Dorsolateral prefrontal cortex (tissue), 120 donors: ENCODE measurements at regions of chr19 and their contacts with region 1.

Region 1: DNA sequence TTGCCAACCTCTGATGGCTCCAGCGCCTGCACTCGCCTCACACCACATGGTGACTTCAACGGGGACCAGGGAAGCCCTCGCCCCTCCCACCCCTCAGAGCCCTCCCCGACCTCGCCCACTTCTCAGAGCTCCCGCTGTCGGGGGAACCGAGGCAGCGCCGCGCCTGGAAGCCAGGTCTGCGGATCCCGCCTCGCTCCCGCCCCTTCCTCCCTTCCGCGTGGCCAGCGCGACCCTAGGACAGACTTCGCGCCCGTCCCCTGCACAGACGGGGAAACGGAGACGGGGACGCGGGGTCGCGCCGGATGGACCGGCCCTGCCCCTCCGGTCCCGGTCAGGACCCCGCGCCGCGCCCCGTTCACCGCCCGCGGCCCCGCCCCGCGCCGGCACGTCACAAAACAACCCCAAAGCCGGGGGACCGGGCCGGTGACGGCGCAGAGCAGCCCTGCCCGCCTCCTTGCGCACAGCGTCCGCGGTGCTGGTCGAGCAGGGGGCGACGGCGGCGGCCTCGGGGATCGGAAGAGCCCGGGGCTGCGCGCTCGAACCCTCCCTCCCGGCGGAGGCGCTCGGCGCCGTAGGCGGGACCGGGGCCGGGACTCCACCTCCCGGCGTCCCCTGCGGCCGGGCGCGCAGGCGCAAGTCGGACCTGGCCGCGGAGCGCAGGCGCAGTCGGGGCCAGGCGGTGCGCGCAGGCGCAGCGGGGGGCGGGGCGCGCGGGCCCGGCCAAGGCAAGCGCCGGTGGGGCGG is 379 bp upstream of the CDC34 start:
- DNase-seq: peak in 8 of 10 donors; percentile 46 to 91 (median 60)
- H3K4me3 ChIP-seq: peak overlapping the region; percentile 63 to 99 (median 92)
- H3K27ac ChIP-seq: peak overlapping the region; percentile 71 to 99 (median 94)
- H3K27me3 ChIP-seq: no peaks in the 10 kb centered on the region
- CTCF ChIP-seq: peak in 9 of 56 donors; percentile 8 to 41 (median 18)

Region 2: DNA sequence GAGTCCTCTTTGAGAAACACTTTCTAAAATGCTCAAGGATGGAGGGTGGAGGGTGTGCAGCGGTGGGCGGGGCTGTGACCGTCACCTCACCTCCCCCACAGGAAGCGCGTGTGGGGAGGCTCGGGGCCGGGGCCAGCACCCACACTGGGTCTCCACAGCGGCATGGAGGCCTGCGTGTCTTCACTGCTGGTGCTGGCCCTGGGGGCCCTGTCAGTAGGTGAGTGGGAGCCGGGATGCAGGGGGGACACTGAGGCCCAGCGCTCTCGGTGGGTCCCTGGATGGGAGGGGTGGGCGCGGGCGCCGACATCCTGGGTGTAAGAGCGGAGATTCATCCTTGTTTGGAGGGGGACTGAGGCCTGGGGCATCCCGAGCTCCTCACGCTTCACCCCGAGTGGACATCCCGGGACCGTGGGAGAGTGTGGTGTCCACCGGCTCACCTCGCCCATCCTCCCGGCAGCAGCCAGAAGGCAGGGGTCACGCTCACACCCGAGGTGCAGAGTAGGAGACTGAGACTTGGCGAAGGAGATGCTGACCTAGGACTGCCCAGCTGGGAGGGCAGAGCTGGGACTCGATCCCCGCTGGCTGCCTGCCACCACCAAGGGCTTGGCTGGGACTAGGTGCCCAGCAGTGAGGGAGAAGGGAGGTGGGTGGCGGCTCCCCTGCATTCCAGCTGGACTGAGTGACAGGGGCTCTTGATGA is 12.9 kb after region 1 on chr19 and contains the start of gene GZMM:
- intact Hi-C with region 1: no loop called
- DNase-seq: no peak
- H3K4me3 ChIP-seq: no peak within 1 kb of the TSS
- H3K27ac ChIP-seq: peak within 1 kb of the TSS in 2 of 59 donors; percentile 27 to 29
- H3K27me3 ChIP-seq: no peaks in the 10 kb centered on the region
- CTCF ChIP-seq: no peak
- total RNA-seq, gene GZMM: 0.43 to 5.3 (median 0.94) TPM in 82 of 120 experiments, not detected in the others

Region 3: DNA sequence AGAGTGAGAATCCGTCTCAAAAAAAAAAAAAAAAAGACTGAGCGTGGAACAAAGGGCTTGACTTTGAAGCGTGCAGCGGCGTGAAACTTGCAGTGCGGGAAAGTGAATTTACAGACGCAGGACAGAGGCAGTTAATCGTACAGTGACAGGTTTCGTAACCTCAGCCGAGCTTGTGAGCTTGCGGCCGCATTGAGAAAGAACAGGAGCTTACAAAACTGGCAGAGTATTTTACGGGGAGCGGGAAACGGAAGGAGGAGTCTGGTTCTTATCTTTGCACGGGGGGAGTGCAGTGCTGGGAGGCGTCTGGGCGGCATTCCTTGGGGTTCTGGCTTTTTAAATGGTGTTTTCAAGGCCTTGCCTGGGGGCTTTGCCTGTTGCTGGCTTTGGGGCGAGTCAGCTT is 35.2 kb after region 1 on chr19:
- intact Hi-C with region 1: no loop called
- DNase-seq: no peak
- H3K4me3 ChIP-seq: peak overlapping the region in 1 of 59 donors; percentile 5
- H3K27ac ChIP-seq: peak overlapping the region in 1 of 59 donors; percentile 43
- H3K27me3 ChIP-seq: peaks cover 0 to 4% (median 0%) of the 10 kb centered on the region in 45 donors
- CTCF ChIP-seq: no peak

Region 4: GRCh38 chr19:633068-633785 is 102.0 kb after region 1 on chr19 and contains the start of gene POLRMT:
- intact Hi-C with region 1: loop called in 1 of 2 experiments (anchors 5 kb)
- DNase-seq: peak; percentile 95 to 98 (median 97)
- H3K4me3 ChIP-seq: peak within 1 kb of the TSS; percentile 58 to 100 (median 95)
- H3K27ac ChIP-seq: peak within 1 kb of the TSS in 52 of 59 donors; percentile 37 to 92 (median 76)
- H3K27me3 ChIP-seq: no peaks in the 10 kb centered on the region
- CTCF ChIP-seq: peak in 43 of 56 donors; percentile 9 to 67 (median 36)
- total RNA-seq, gene POLRMT: 27.8 to 91.2 (median 61.9) TPM

Region 5: GRCh38 chr19:718991-719512 is 187.9 kb after region 1 on chr19:
- intact Hi-C with region 1: no loop called
- DNase-seq: peak in 6 of 10 donors; percentile 29 to 72 (median 57)
- H3K4me3 ChIP-seq: peak overlapping the region in 56 of 59 donors; percentile 10 to 67 (median 52)
- H3K27ac ChIP-seq: peak overlapping the region; percentile 41 to 95 (median 88)
- H3K27me3 ChIP-seq: no peaks in the 10 kb centered on the region
- CTCF ChIP-seq: no peak